B cell (primary cell): ENCODE measurements at regions of chr7 and their contacts with region 1.

Region 1: GRCh38 chr7:142894112-142894984 is 8.8 kb upstream of the TRPV6 start:
- DNase-seq: no peak
- ATAC-seq: no peak
- H3K4me3 ChIP-seq: no peak overlapping the region
- H3K4me3 Mint-ChIP-seq: no peak overlapping the region
- H3K27ac ChIP-seq: no peak overlapping the region
- H3K27ac Mint-ChIP-seq: no peak overlapping the region
- H3K4me1 ChIP-seq: no peaks in the 10 kb centered on the region
- H3K4me1 Mint-ChIP-seq: no peaks in the 10 kb centered on the region
- H3K27me3 ChIP-seq: peaks cover 0 to 3% (median 1%) of the 10 kb centered on the region in 4 experiments
- H3K27me3 Mint-ChIP-seq: peaks cover 36% of the 10 kb centered on the region
- CTCF ChIP-seq: no peak

Region 2: DNA sequence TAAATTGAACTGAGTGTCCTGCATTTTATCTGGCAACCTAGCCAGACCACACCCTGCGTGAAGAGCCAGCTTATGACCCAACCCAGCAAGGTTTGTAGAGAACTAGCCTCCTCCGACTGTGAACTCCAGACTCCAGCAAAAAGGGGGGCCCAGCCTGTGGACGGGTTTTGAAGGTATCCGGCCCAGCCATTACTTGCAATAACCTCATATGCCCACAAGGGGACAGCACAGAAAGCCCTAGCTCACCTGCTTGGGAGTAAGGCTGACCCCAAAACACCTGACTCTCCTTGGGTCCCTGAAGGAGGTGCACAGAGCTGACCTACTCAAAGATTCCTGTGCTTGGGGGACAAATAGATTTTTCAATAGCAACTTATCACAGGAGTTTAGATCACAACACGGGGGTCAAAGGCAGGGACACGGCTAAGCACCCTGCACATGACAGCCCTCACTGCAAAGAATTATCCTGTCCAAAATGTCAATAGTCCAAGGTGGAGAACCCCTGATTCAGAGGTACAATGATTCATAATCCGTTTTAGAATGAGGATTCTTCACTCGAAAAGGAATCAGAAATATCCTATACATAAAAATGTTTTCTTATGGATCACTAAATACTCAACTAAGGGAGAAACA is 13.4 kb before region 1 on chr7:
- CTCF ChIA-PET with region 1: interaction called, 14 read pairs
- POLR2A ChIA-PET with region 1: no interaction called
- intact Hi-C with region 1: no loop called
- DNase-seq: peak; percentile 70
- ATAC-seq: peak; percentile 81
- H3K4me3 ChIP-seq: no peak overlapping the region
- H3K4me3 Mint-ChIP-seq: no peak overlapping the region
- H3K27ac ChIP-seq: no peak overlapping the region
- H3K27ac Mint-ChIP-seq: no peak overlapping the region
- H3K4me1 ChIP-seq: no peaks in the 10 kb centered on the region
- H3K4me1 Mint-ChIP-seq: no peaks in the 10 kb centered on the region
- H3K27me3 ChIP-seq: peaks cover 0 to 8% (median 1%) of the 10 kb centered on the region in 4 experiments
- H3K27me3 Mint-ChIP-seq: peaks cover 13% of the 10 kb centered on the region
- CTCF ChIP-seq: peak; percentile 92

Region 3: DNA sequence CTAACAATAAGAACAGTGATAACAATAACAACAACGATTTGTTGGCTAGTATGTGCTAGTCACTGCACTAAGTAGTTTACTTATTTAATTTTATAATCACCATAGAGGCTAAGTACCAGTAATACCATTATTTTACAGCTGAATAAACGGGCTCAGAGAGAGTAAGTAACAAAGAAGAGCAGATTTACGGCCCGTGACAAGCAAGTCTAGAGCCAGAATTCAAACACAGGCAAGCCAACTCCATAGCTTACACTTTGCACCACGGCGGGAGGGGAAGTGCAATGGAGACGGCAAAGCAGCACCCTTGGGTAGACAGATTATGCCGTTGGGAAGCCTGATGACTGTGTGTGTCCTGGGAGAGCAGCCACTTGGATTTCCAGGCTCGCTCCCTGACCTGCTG is 156.6 kb after region 1 on chr7:
- CTCF ChIA-PET with region 1: no interaction called
- POLR2A ChIA-PET with region 1: no interaction called
- intact Hi-C with region 1: no loop called
- DNase-seq: no peak
- ATAC-seq: no peak
- H3K4me3 ChIP-seq: no peak overlapping the region
- H3K4me3 Mint-ChIP-seq: no peak overlapping the region
- H3K27ac ChIP-seq: no peak overlapping the region
- H3K27ac Mint-ChIP-seq: no peak overlapping the region
- H3K4me1 ChIP-seq: peaks cover 28 to 37% of the 10 kb centered on the region in 2 donors
- H3K4me1 Mint-ChIP-seq: peaks cover 50% of the 10 kb centered on the region
- H3K27me3 ChIP-seq: no peaks in the 10 kb centered on the region
- H3K27me3 Mint-ChIP-seq: no peaks in the 10 kb centered on the region
- CTCF ChIP-seq: no peak